A549 (cell line): ENCODE measurements at regions of chr5 and their contacts with region 1.

Region 1: GRCh38 chr5:16952968-16953671 is 17.0 kb upstream of the MYO10 start:
- DNase-seq: no peak
- ATAC-seq: 0 out of 6 replicates have a peak, but pooled peaks of 1 of the 2 experiments have one; percentile 34
- H3K4me3 ChIP-seq: no peak overlapping the region
- H3K27ac ChIP-seq: peak overlapping the region in 1 of 2 experiments; percentile 27; a peak in 1 of 6 replicates
- H3K4me1 ChIP-seq: peaks cover 7% of the 10 kb centered on the region; the same call in 2 of the 3 replicates
- CTCF ChIP-seq: no peak
- EP300 ChIP-seq: no peak
- POLR2A ChIP-seq: no peak
- RAD21 ChIP-seq: no peak

Region 2: DNA sequence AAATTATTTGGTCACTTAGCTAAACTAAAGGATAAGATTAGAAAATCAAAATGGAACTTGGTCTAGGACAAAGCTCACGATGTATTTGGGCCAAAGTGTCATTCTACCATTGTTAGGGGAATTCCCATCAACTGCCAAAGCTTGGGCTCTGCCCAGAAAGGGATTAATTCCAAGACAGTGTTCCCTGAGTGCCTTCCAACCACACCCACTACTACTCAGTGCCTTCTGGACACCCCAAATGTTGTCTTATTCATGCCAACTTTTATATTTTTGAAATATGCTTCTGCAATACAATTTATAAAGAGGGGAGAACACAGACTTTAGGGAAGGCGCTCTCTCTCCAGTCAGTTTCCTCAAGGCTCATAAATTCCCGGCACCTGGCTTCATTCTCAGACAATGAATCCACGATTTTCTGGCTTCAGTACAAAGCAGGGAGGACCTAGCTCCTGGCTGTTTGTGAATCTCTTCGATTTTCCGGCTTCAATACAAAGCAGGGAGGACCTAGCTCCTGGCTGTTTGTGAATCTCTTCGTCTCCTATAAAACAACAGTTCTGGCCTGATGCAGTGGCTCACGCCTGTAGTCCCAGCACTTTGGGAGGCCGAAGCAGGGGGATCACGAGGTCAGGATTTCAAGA is 103.1 kb after region 1 on chr5:
- CTCF ChIA-PET with region 1: no interaction called
- POLR2A ChIA-PET with region 1: interaction called, 10 read pairs
- DNase-seq: peak in 1 of 2 experiments; percentile 49
- ATAC-seq: peak; percentile 67 to 71
- H3K4me3 ChIP-seq: no peak overlapping the region
- H3K27ac ChIP-seq: peak overlapping the region; percentile 62 to 81
- H3K4me1 ChIP-seq: peaks cover 37% of the 10 kb centered on the region
- CTCF ChIP-seq: no peak
- EP300 ChIP-seq: peak in 1 of 2 experiments; percentile 16; a peak in 1 of 5 replicates
- POLR2A ChIP-seq: no peak
- RAD21 ChIP-seq: 0 out of 5 replicates have a peak, but pooled peaks of 1 of the 2 experiments have one; percentile 16